ENCODE measurements at regions of chrX and their contacts with region 1.

Region 1: GRCh38 chrX:38803586-38804431 is 2.5 kb downstream of the MID1IP1 start:
- DNase-seq: peak; percentile 79
- H3K4me3 Mint-ChIP-seq: peak overlapping the region; percentile 87
- H3K27ac Mint-ChIP-seq: peak overlapping the region; percentile 97
- H3K4me1 Mint-ChIP-seq: peaks cover 17% of the 10 kb centered on the region
- H3K27me3 Mint-ChIP-seq: no peaks in the 10 kb centered on the region

Region 2: GRCh38 chrX:37986893-37987292 is 816.9 kb before region 1 on chrX:
- CTCF ChIA-PET with region 1: no interaction called
- intact Hi-C with region 1: no loop called
- DNase-seq: no peak
- H3K4me3 Mint-ChIP-seq: no peak overlapping the region
- H3K27ac Mint-ChIP-seq: no peak overlapping the region
- H3K4me1 Mint-ChIP-seq: no peaks in the 10 kb centered on the region
- H3K27me3 Mint-ChIP-seq: no peaks in the 10 kb centered on the region

Region 3: DNA sequence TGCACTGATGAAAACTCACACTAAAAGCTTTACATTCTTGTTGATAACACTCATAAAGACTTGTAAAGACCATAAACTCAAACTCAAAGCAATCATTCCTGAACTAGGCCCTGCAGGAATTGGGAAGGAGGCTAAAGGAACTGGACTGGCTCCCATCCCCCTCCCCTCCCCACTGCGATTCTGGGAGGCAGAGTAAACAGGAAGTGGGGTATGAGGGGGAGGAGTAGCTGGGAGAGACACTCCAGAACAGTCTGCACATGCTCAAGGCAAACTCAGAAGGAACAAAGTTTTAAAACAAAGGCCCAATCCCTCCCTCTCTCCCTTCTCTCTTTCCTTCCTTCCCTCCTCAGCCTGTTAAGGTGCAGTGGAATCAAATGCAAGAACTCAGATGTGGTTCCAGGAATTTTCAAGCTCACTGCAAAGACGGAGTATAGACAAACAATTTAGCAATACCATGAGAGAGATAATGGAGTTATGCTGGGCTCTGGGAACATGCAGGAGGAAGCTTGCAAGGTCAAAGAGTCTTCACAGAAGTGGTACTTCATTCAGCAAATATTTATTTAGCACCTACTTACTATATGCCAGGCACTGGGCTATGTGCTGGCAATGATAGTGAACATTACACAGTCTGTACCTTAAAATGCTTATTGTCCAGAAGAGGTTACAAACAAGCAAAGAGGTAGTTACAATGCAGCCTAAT is 13.3 kb after region 1 on chrX:
- CTCF ChIA-PET with region 1: interaction called, 3 read pairs
- intact Hi-C with region 1: loop called (anchors 1 kb)
- DNase-seq: no peak
- H3K4me3 Mint-ChIP-seq: no peak overlapping the region
- H3K27ac Mint-ChIP-seq: no peak overlapping the region
- H3K4me1 Mint-ChIP-seq: peaks cover 7% of the 10 kb centered on the region
- H3K27me3 Mint-ChIP-seq: no peaks in the 10 kb centered on the region

Region 4: GRCh38 chrX:38891641-38892413 is 88.0 kb after region 1 on chrX:
- CTCF ChIA-PET with region 1: no interaction called
- intact Hi-C with region 1: loop called (anchors 5 kb)
- DNase-seq: peak; percentile 52
- H3K4me3 Mint-ChIP-seq: no peak overlapping the region
- H3K27ac Mint-ChIP-seq: no peak overlapping the region
- H3K4me1 Mint-ChIP-seq: peaks cover 12% of the 10 kb centered on the region
- H3K27me3 Mint-ChIP-seq: no peaks in the 10 kb centered on the region

Region 5: DNA sequence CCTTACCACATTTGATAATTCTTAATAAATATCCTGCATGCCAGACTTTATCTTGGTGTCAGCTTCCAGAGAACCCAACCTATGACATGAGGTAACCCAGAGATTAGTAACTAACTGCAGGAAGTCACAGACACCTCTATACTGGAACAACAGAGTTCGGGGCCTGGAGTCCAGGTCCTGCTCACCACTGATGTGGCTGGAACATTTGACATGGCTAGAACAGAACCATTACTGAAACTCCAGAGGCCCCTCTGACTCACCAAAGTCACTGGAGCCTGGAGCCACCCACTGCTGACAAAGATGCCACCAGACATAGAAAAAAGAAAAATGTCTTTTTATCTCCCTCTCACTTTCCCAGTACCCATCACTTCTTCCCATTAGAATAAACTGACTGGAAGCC is 401.1 kb after region 1 on chrX:
- CTCF ChIA-PET with region 1: no interaction called
- intact Hi-C with region 1: no loop called
- DNase-seq: peak; percentile 66
- H3K4me3 Mint-ChIP-seq: no peak overlapping the region
- H3K27ac Mint-ChIP-seq: peak overlapping the region; percentile 32
- H3K4me1 Mint-ChIP-seq: peaks cover 46% of the 10 kb centered on the region
- H3K27me3 Mint-ChIP-seq: no peaks in the 10 kb centered on the region

Region 6: GRCh38 chrX:39309018-39309635 is 505.3 kb after region 1 on chrX:
- CTCF ChIA-PET with region 1: no interaction called
- intact Hi-C with region 1: loop called (anchors 2 kb)
- DNase-seq: peak; percentile 75
- H3K4me3 Mint-ChIP-seq: no peak overlapping the region
- H3K27ac Mint-ChIP-seq: peak overlapping the region; percentile 100
- H3K4me1 Mint-ChIP-seq: peaks cover 79% of the 10 kb centered on the region
- H3K27me3 Mint-ChIP-seq: no peaks in the 10 kb centered on the region

Region 7: DNA sequence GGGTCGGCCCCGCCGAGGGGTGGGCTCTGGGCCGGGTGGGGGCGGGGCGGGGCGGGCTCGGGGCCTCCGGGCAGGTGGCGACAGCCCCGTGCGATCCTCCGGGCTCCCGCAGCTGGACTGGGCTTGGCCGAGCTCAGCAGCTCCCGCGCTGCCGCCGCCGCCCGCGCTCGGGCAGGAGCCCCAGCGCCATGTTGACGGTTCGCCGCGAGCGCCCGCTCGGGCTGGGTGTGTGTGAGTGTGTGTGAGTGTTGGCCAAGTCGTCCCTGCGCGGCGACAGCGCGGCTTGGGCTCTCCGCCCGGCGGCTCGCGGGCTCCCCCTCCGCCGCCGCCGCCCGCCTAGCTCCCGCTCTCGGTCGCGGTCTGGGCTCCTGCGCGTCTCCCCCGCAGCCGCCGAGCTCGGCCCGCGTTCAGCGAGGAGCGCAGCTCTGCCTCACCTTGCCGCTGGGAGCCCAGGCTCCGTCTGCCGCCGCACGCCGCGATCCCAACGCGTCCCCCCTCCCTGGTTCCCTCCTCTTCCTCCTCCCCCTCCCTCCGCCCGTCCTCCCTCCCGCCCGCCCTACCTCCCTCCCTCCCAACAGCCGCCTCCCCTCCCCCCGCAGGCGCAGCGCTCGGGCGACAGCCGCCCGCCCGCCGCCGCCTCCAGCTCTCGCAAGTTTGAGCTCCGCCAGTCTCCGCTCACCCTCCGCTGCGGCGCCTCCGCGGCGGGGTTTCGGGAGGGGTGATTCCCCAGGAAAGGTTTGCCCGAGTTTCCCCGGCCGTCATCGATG is 1293.9 kb after region 1 on chrX and contains the start of gene BCOR:
- CTCF ChIA-PET with region 1: no interaction called
- intact Hi-C with region 1: loop called (anchors 2 kb)
- DNase-seq: peak; percentile 75
- H3K4me3 Mint-ChIP-seq: peak within 1 kb of the TSS; percentile 86
- H3K27ac Mint-ChIP-seq: peak within 1 kb of the TSS; percentile 82
- H3K4me1 Mint-ChIP-seq: peaks cover 24% of the 10 kb centered on the region
- H3K27me3 Mint-ChIP-seq: no peaks in the 10 kb centered on the region
- total RNA-seq, gene BCOR: 29.1 to 29.9 TPM

Measured in activated naive CD4-positive, alpha-beta T cell treated with anti-CD3 and anti-CD28 coated beads for 36 hours (primary cell).